Uterus (tissue), 4 donors: ENCODE measurements at regions of chr10 and their contacts with region 1.

Region 1: DNA sequence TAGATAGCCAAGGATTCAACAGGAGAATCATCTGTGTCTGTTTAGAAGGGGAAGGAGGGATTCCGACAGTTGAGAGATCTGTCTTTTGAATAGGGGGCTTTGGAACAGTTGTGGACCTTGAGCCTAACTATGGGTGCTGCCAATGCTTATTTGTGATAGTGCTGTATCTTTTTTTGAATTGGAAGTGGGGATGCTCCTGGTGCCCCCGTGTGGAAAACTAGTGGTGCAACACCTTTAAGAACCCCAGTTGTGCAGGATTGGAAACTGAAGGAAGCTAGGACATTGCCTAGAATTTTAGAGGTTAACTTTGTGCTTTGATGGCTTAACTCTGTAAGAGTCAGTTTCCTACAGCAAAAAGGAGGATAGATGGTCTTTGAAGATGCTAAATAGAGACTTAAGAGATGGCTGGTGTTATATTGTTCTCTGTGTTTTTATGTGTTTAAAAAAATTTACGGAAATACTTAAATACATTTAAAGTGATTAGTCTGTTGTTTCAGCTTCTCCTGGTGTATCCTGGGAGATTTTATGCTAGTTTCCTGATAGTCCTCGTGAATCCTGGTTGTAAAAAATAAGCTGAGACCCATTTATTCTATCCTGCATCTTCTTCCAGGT is 69.3 kb downstream of the AP3M1 start:
- DNase-seq: peak; percentile 42 to 47
- H3K4me3 ChIP-seq: no peak overlapping the region
- H3K27ac ChIP-seq: peak overlapping the region in 1 of 2 donors; percentile 44
- H3K4me1 ChIP-seq: peaks cover 0 to 3% of the 10 kb centered on the region in 2 donors
- H3K27me3 ChIP-seq: no peaks in the 10 kb centered on the region
- CTCF ChIP-seq: peak; percentile 65 to 74 (median 72)
- POLR2A ChIP-seq: no peak

Region 2: GRCh38 chr10:73886085-73886529 is 195.2 kb before region 1 on chr10:
- intact Hi-C with region 1: loop called (anchors 5 kb)
- DNase-seq: peak; percentile 79 to 80
- H3K4me3 ChIP-seq: no peak overlapping the region
- H3K27ac ChIP-seq: peak overlapping the region; percentile 82 to 86
- H3K4me1 ChIP-seq: peaks cover 11 to 20% of the 10 kb centered on the region in 2 donors
- H3K27me3 ChIP-seq: no peaks in the 10 kb centered on the region
- CTCF ChIP-seq: peak; percentile 84 to 93 (median 89)
- POLR2A ChIP-seq: no peak

Region 3: DNA sequence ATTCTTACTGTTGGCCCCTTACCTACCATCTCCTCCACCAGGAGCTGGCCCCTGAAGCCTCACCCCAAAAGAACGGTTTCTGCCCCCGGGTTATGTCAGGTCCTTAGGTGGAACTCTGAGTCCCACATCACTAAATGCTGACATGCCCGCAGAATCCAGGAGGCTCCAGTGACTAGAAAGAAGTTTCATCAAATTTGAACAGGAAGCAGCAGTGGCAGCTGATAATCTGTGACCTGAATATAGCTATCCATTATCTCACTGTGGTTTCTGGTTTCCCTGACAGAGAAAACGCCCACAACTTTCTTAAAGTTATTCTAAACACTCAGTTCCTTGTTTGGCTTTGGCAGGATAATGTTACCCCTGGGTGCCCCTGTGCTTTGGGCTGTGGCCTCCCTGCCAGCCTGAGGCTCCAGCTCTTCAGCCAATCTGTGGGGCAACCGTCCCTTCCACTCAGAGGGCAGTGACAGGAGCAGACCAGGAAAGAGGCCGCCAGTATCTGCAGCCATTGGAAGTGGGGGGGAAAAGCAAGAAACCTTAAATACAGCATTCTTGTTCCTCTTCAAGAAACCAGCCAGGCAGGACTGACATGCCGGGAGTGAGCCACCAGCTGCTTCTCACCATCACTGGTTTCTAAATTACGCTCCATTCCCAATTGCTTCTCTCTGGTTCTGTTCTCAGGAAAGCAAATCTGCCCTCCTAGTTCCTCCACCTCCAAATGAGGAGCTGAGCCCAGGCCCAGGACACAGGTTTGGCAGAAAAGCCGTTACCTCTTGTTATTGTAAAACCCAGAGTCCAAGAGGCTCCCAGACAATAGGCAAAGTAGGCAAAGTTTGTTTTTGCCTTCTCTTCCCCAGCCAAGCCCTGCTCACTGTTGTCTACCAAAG is 124.6 kb before region 1 on chr10:
- intact Hi-C with region 1: loop called (anchors 10 kb)
- DNase-seq: no peak
- H3K4me3 ChIP-seq: no peak overlapping the region
- H3K27ac ChIP-seq: no peak overlapping the region
- H3K4me1 ChIP-seq: no peaks in the 10 kb centered on the region
- H3K27me3 ChIP-seq: no peaks in the 10 kb centered on the region
- CTCF ChIP-seq: no peak
- POLR2A ChIP-seq: no peak

Region 4: GRCh38 chr10:74008212-74008731 is 73.0 kb before region 1 on chr10:
- intact Hi-C with region 1: loop called (anchors 10 kb)
- DNase-seq: no peak
- H3K4me3 ChIP-seq: no peak overlapping the region
- H3K27ac ChIP-seq: peak overlapping the region; percentile 27 to 43
- H3K4me1 ChIP-seq: peaks cover 3 to 10% of the 10 kb centered on the region in 2 donors
- H3K27me3 ChIP-seq: no peaks in the 10 kb centered on the region
- CTCF ChIP-seq: no peak
- POLR2A ChIP-seq: no peak

Region 5: GRCh38 chr10:74213571-74214162 is 132.4 kb after region 1 on chr10:
- intact Hi-C with region 1: no loop called
- DNase-seq: no peak
- H3K4me3 ChIP-seq: no peak overlapping the region
- H3K27ac ChIP-seq: no peak overlapping the region
- H3K4me1 ChIP-seq: no peaks in the 10 kb centered on the region
- H3K27me3 ChIP-seq: no peaks in the 10 kb centered on the region
- CTCF ChIP-seq: peak in 1 of 4 experiments; percentile 39
- POLR2A ChIP-seq: no peak